Esophagus muscularis mucosa (tissue), 4 donors: ENCODE measurements at regions of chr9 and their contacts with region 1.

Region 1: DNA sequence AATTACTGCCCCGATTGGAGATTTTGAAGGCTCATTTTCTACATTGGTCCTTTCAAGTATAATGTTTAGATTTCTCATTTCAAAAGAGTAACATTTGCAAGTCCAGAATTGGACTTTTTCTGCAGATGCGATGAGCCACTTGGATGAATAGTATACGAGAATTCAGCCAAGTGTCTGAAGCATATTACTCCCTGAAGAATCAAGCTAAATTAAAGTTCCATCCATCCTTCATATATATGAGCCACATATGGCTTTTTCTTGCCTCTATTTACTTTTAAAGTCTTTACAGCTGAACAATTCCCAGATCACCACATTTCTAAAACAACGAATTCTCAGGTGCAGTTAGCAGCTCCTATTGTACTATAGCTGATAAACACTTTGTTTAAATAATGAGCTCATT is 288.7 kb downstream of the CEMIP2 start:
- DNase-seq: no peak
- H3K4me3 ChIP-seq: no peak overlapping the region
- H3K27ac ChIP-seq: no peak overlapping the region
- H3K4me1 ChIP-seq: no peaks in the 10 kb centered on the region
- H3K27me3 ChIP-seq: peaks cover 0 to 5% (median 0%) of the 10 kb centered on the region in 4 donors
- CTCF ChIP-seq: no peak
- EP300 ChIP-seq: no peak
- POLR2A ChIP-seq: no peak

Region 2: DNA sequence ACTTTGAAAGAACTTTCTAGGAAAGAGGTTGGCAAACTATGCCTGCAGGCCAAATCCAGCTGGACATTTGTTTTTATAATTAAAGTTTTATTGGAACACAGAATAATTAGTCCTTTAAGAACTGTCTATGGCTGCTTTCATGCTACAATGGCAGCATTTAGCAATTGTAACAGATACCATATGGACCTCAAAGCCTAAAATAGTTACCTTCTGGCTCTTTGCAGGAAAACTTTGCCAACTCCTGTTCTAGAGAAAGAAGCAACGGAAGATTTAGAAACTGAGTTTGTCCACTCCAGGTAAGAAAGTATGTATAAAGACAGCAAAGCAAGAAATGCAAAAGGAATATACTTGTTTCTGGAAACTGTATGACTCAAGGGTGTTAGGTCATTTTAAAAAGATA is 76.5 kb before region 1 on chr9:
- intact Hi-C with region 1: loop called (anchors 10 kb)
- DNase-seq: no peak
- H3K4me3 ChIP-seq: no peak overlapping the region
- H3K27ac ChIP-seq: no peak overlapping the region
- H3K4me1 ChIP-seq: no peaks in the 10 kb centered on the region
- H3K27me3 ChIP-seq: peaks cover 0 to 4% (median 0%) of the 10 kb centered on the region in 4 donors
- CTCF ChIP-seq: no peak
- EP300 ChIP-seq: no peak
- POLR2A ChIP-seq: no peak

Region 3: DNA sequence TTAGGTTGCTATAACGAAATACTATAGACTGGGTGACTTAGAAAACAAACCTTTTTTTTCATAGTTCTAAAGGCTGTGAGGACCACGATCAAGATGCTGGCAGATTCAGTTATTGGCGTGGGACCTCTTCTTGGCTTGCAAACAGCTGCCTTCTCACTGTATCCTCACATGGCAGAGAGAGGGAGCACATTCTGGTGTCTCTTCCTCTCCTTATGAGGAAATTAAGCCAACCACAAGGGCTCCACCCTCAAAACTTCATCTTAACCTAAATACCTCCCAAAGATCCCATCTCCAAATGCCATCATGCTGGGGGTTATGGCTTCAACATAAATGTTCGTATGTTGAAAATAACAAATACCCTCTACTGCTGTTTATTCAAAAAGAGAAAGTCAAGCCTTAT is 91.6 kb after region 1 on chr9:
- intact Hi-C with region 1: loop called (anchors 10 kb)
- DNase-seq: no peak
- H3K4me3 ChIP-seq: no peak overlapping the region
- H3K27ac ChIP-seq: no peak overlapping the region
- H3K4me1 ChIP-seq: no peaks in the 10 kb centered on the region
- H3K27me3 ChIP-seq: no peaks in the 10 kb centered on the region
- CTCF ChIP-seq: no peak
- EP300 ChIP-seq: no peak
- POLR2A ChIP-seq: no peak